BJ (cell line): ENCODE measurements at regions of chr16 and their contacts with region 1.

Region 1: DNA sequence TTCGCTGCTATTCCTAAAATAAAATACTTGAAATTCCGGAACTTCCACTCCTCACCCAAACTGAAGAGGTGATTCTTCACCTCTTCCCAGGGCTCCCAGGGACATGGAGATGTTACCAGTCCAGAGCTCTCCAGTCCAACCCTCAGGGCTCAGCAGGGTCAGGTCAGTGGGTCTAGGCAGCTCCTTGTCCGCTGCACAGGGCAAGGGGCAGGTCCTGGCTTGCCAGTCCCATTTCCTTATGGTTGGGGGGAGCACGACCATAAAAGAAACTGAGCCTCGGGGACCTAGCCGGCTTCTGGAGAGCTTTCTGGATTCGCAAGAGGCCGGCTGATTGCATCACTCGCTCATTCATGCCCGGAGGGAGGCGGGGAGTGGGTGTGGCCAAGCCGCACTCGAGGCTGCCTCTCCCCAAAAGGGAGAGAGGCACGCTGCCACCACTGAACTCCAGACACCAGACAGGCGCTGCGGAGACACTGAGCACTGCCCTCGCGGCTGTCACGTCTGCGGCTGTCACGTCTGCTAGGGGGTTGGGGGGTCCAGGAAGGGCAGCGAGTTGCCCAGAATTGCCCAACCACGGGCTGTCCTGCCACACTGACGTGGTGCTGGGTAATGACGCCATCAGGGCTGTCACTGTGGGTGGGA is 15.8 kb downstream of the SLC7A5 start:
- DNase-seq: peak; percentile 80
- H3K4me3 ChIP-seq: peak overlapping the region; percentile 20; the same call in 1 of the 2 replicates
- H3K27me3 ChIP-seq: no peaks in the 10 kb centered on the region
- CTCF ChIP-seq: no peak

Region 2: DNA sequence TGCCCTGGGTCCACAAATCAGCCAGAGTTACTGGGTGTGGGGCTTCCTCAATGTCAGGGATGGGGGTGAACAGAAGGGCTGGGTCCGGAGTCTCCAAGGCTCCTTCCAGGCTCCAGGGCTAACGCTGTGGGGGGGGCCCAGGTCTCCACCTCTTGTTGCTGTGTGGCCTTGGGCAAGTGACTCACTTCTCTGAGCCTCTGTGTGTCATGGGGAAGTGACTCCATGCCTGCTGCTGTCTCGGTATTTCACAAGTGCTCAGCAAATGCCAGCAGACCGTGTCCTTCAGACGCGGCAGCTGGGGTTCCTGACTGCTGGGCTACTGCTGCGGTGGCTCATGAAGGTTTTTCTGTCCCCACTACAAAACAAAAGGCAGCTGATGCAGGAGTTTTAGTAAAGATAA is 224.6 kb before region 1 on chr16:
- CTCF ChIA-PET with region 1: no interaction called
- POLR2A ChIA-PET with region 1: no interaction called
- DNase-seq: no peak
- H3K4me3 ChIP-seq: no peak overlapping the region
- H3K27me3 ChIP-seq: peaks cover 3% of the 10 kb centered on the region
- CTCF ChIP-seq: no peak

Region 3: DNA sequence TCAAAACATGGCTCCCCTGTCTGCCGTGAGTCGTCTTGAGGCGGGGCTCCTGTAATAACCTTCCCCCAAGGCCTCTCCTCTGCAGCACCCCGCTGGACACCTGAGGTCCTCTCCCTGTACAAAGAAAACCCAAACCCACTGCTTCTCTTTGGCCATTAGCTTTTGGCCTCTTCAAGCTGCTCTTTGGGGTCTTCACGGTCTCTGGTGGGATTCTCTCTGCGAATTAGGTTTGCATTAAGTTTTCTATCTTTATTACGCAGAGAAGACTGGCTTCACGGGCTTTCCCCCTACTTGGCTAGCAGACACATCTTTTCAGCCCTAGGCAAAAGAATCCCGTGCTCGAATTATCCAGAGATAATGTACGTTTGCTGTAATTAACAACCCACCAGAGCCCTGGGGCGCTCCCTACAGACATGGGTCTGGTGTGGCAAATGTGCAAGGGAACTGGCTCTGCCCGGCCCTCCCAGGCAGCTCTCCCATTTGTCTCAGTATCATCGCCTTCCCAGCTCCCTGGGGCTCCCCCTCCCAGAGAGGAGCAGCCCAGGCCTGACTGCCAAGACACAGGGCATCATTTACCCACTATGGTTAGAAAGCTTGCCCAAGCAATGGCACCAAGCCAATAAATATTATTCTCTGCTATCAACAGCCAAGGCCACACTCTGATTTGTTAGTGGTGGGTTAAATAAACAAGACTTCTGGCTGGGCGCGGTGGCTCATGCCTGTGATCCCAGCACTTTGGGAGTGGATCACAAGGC is 63.1 kb before region 1 on chr16:
- CTCF ChIA-PET with region 1: interaction called, 11 read pairs
- POLR2A ChIA-PET with region 1: interaction called, 8 read pairs
- DNase-seq: no peak
- H3K4me3 ChIP-seq: no peak overlapping the region
- H3K27me3 ChIP-seq: no peaks in the 10 kb centered on the region; the same call in none of the 2 replicates
- CTCF ChIP-seq: no peak

Region 4: DNA sequence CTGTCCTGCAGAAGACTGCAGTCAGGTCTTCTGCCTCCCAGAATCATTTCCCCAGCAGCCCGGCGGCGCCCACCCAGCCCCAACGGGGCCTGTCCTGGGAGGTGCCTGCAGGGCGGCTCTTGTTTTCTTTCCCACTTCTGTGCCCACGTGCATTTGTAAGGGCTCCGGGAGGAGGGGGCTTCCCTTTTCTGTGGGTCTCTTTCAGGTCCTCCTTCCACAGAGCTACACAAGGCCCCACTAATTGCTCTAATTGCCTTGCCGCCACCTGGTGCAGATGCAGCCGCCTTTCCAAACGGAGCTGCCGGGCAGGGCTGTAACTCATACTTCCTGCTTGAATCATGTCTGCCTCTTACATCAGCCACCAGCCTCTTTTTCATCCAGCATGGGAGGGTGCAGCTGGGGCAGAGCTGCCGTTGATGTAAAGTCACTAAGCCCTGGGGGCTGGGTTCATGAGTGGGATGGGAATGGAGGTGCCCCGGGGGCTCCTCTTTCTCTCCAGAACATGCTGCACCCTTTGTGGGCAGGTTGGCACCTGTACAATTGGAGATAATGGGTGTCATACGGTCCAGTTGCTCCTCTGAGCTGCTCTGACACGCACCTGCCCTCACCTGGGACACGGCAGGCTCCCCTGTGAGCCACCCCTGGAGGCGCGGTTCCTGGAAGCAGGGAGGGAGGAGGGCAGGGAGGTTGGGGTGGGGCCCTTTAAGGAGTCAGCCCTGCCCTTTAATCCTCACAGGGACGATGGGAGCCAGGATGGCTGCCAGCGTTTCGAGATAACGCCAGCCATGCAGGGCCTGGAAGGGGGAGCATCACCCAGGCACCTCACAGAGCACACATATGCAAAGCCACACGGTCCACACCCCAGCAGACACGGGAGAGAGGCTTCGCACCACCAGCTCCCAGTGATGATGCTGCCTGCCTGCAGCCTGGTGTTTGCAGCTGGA is 46.7 kb before region 1 on chr16:
- CTCF ChIA-PET with region 1: interaction called, 12 read pairs
- POLR2A ChIA-PET with region 1: no interaction called
- DNase-seq: peak; percentile 70
- H3K4me3 ChIP-seq: peak overlapping the region; percentile 36
- H3K27me3 ChIP-seq: no peaks in the 10 kb centered on the region
- CTCF ChIP-seq: no peak

Region 5: DNA sequence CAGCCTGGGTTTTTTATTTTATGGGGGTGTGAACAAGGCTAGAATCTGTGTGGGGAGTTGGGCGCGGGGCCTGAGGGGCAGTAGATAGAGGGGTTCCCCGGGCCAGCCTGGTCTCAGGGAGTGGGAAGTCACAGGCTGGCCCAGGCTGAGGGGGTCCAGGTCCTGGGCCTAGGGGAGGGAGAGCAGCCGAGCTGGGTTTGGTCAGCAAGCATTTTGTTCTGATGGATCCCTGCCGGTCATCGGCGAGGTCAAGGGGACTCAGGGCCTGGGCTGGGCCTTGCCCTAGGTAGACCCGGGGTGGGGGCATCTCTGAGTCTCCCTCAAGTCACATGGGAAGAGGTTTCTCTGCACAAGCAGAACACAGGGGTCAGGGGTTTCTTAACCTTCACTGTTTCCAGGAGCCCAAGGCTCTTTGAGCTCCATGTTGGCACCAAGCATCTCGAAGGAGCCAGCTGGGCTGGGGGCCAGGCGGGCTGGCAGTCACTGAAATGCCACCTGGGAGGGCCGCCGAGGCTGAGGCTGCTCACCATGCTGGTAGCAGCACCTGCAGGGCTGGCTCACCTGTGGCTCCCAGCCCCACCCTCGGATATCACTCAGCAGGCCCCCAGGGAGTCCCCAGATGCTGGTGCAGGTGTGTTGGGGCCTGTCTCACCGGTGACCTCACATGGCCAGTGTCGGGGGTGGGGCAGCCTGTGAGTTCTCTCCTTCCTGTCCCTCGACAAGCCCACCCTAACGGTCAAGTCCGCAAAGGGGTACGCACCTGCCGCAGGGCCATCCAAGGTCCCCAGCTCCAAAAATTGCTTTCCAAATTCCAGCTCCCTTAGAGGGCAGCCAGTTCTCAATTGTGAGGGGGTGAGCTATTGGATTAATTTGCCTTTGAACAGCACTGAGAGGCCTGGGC is 25.2 kb before region 1 on chr16:
- CTCF ChIA-PET with region 1: interaction called, 15 read pairs
- POLR2A ChIA-PET with region 1: no interaction called
- DNase-seq: no peak
- H3K4me3 ChIP-seq: no peak overlapping the region
- H3K27me3 ChIP-seq: no peaks in the 10 kb centered on the region
- CTCF ChIP-seq: no peak

Region 6: DNA sequence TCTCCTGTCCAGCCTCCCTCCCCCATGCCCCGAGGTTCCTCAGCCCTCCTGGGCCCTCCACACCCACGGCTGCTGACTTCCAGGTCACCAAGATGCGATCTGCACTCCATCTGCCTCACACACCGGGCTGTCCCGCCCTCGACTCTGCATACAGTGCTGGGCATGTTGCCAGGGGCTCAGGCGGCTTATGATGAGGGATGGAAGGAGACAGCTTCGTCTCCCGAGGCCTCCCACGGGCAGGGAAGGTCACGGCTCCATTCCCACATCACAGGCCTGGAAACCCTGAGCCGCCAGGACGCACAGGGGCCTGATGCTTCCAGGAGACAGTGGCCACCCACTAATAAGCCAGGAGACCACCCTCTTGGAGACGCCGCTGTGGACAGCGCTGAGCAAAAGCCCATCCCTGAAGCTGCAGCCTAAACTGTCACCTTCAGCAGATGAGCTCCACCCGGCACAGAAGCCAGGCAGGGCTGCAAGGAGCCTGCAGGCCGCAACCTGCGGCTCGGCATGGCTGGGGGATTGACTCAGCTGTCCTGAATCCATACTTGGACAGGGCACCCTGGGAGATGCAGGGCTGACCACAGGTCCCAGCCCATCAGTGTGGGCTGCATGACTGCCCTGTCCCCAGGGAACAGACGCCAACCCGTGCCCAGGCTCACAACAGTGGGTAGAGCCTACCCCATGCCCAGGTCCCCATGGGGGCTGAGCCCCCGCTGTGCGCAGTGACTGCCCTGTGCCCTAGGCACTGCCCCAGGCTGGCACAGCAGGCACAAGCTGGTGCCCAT is 18.7 kb before region 1 on chr16:
- CTCF ChIA-PET with region 1: interaction called, 51 read pairs
- POLR2A ChIA-PET with region 1: no interaction called
- DNase-seq: no peak
- H3K4me3 ChIP-seq: no peak overlapping the region
- H3K27me3 ChIP-seq: no peaks in the 10 kb centered on the region
- CTCF ChIP-seq: no peak

Region 7: GRCh38 chr16:87877938-87878507 is 24.5 kb after region 1 on chr16:
- CTCF ChIA-PET with region 1: interaction called, 16 read pairs
- POLR2A ChIA-PET with region 1: no interaction called
- DNase-seq: no peak
- H3K4me3 ChIP-seq: no peak overlapping the region
- H3K27me3 ChIP-seq: peaks cover 12% of the 10 kb centered on the region; the same call in 1 of the 2 replicates
- CTCF ChIP-seq: peak; percentile 21; the same call in 1 of the 2 replicates

Region 8: GRCh38 chr16:87914812-87915211 is 61.3 kb after region 1 on chr16:
- CTCF ChIA-PET with region 1: interaction called, 10 read pairs
- POLR2A ChIA-PET with region 1: no interaction called
- DNase-seq: no peak
- H3K4me3 ChIP-seq: no peak overlapping the region
- H3K27me3 ChIP-seq: 0 out of 2 replicates have a peak, but pooled peaks cover under 1% of the 10 kb centered on the region
- CTCF ChIP-seq: no peak

Region 9: DNA sequence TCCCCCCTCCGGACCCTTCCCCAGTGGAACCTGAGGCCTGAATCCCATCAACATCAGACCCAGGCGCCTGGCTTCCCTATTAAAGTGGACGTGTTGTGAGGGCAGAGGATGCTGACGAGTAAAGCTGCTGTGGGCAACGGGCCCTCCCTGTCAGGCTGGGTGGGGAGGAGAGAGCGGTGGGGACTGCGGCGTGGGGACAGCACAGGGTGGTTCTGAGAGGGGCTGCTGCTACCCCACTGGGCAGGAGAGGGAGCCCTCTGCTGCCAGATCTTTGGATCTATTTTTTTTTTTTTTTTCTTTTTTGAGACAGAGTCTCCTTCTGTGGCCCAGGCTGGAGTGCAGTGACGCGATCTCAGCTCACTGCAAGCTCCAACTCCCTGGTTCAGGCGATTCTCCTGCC is 76.9 kb after region 1 on chr16:
- CTCF ChIA-PET with region 1: no interaction called
- POLR2A ChIA-PET with region 1: no interaction called
- DNase-seq: no peak
- H3K4me3 ChIP-seq: no peak overlapping the region
- H3K27me3 ChIP-seq: peaks cover 3% of the 10 kb centered on the region; the same call in 1 of the 2 replicates
- CTCF ChIP-seq: peak; percentile 26

Region 10: DNA sequence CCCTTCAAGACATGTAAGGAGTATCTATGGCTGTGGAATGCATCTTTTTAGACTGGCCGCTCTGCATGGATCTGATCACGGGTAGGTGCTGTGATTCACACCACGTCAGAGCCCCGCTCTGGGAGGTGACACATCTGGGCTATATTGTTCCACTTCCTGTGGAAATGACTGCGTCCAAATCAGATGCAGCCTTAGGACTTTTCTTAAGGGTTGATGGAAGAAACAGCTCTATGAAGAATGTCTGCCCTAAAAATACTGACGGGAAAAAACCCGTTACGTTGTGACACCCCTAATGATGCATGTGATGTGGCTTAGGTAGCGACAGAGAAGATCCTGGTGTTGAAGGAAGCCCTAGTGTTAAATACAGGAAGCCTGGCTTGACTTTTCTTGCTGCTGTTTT is 109.9 kb after region 1 on chr16:
- CTCF ChIA-PET with region 1: no interaction called
- POLR2A ChIA-PET with region 1: no interaction called
- DNase-seq: peak; percentile 43
- H3K4me3 ChIP-seq: no peak overlapping the region
- H3K27me3 ChIP-seq: no peaks in the 10 kb centered on the region
- CTCF ChIP-seq: no peak